Mammary epithelial cell (primary cell): ENCODE measurements at regions of chr7 and their contacts with region 1.

Region 1: DNA sequence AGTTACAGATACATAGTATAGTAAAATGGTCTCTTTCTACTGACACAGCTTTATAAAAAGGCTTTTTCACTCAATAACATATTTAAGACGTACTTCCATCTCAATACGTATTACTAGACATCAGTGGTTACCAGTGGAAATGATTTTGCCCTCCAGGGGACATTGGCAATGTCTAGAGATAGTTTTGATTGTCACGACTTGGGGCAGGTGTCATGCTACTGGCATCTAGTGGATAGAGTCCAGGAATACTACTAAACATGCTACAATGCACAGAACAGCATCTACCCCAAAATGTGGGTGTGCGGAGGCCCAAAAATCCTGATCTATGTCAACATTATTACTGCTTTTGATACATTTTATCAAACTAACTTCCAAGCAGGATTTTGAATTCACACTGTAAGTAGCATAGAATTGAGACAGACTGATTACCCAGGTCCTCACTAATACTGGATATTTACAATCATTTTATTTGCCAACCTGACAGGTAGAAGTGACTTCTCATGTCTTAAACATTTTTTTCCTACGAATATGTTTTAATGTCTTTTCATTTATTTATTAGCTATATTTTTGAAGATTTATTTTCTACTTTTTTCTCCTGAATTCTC is 53.8 kb downstream of the HGF start:
- DNase-seq: peak; percentile 42
- H3K4me3 ChIP-seq: no peak overlapping the region
- H3K27ac ChIP-seq: no peak overlapping the region
- H3K4me1 ChIP-seq: no peaks in the 10 kb centered on the region
- H3K27me3 ChIP-seq: no peaks in the 10 kb centered on the region
- CTCF ChIP-seq: peak; percentile 59 to 86

Region 2: GRCh38 chr7:81420526-81421226 is 295.4 kb before region 1 on chr7:
- CTCF ChIA-PET with region 1: no interaction called
- dilution Hi-C with region 1: no loop called
- in situ Hi-C with region 1: no loop called
- intact Hi-C with region 1: no loop called
- DNase-seq: no peak
- H3K4me3 ChIP-seq: no peak overlapping the region
- H3K27ac ChIP-seq: no peak overlapping the region
- H3K4me1 ChIP-seq: no peaks in the 10 kb centered on the region
- H3K27me3 ChIP-seq: no peaks in the 10 kb centered on the region
- CTCF ChIP-seq: no peak

Region 3: DNA sequence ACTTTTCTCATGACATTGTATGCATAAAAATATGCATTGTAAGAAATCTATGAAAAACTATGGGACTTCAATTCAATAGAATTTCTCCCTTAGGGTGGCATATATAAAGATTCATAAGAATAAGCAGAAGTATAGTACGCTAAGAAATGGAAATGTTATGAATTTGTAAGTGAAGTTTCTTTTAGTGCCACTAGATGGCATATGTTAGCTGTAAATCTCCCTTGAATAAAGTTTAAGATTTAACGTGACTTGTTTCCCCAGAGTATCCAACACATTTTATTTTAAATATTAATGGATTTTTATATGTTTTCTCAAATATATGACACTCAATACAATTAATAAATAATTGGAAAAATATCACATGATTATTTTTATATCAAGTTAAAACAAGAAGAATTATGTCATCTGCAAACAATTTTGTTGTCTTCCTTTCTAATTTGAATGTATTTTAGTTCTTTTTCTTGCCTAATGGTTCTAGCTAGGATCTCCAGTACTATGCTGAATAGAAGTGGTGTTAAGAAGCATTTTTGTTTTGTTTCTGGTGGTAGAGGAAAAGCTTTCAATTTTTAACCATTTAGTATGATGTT is 233.4 kb before region 1 on chr7:
- CTCF ChIA-PET with region 1: no interaction called
- dilution Hi-C with region 1: no loop called
- in situ Hi-C with region 1: no loop called
- intact Hi-C with region 1: loop called (anchors 5 kb)
- DNase-seq: no peak
- H3K4me3 ChIP-seq: no peak overlapping the region
- H3K27ac ChIP-seq: no peak overlapping the region
- H3K4me1 ChIP-seq: no peaks in the 10 kb centered on the region
- H3K27me3 ChIP-seq: no peaks in the 10 kb centered on the region
- CTCF ChIP-seq: peak; percentile 42 to 57

Region 4: DNA sequence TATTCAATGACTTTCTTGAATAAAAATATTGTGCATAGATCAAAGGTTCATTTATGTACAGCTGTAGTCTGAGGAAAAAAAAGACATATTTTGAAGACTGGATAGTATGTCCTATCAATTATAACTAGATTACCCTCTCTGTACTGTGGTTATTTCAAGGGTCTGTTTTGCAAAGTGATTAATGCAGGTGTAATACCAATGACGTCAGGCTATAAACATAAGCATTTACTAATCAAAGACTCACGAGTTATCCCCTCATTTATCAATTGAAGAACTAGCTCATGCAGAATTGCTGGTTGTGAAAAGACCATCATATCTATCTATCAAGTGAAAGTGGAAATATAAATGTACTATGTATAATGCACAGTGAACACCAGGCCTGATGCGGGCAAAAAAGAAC is 267.3 kb after region 1 on chr7:
- CTCF ChIA-PET with region 1: interaction called, 18 read pairs
- dilution Hi-C with region 1: no loop called
- in situ Hi-C with region 1: no loop called
- intact Hi-C with region 1: no loop called
- DNase-seq: no peak
- H3K4me3 ChIP-seq: no peak overlapping the region
- H3K27ac ChIP-seq: no peak overlapping the region
- H3K4me1 ChIP-seq: no peaks in the 10 kb centered on the region
- H3K27me3 ChIP-seq: no peaks in the 10 kb centered on the region
- CTCF ChIP-seq: no peak

Region 5: GRCh38 chr7:82017334-82017943 is 301.4 kb after region 1 on chr7:
- CTCF ChIA-PET with region 1: no interaction called
- dilution Hi-C with region 1: no loop called
- in situ Hi-C with region 1: no loop called
- intact Hi-C with region 1: loop called (anchors 1 kb)
- DNase-seq: peak; percentile 7
- H3K4me3 ChIP-seq: no peak overlapping the region
- H3K27ac ChIP-seq: no peak overlapping the region
- H3K4me1 ChIP-seq: peaks cover 8% of the 10 kb centered on the region
- H3K27me3 ChIP-seq: no peaks in the 10 kb centered on the region
- CTCF ChIP-seq: peak; percentile 40 to 67